ENCODE measurements at regions of chr14 and their contacts with region 1.

Region 1: DNA sequence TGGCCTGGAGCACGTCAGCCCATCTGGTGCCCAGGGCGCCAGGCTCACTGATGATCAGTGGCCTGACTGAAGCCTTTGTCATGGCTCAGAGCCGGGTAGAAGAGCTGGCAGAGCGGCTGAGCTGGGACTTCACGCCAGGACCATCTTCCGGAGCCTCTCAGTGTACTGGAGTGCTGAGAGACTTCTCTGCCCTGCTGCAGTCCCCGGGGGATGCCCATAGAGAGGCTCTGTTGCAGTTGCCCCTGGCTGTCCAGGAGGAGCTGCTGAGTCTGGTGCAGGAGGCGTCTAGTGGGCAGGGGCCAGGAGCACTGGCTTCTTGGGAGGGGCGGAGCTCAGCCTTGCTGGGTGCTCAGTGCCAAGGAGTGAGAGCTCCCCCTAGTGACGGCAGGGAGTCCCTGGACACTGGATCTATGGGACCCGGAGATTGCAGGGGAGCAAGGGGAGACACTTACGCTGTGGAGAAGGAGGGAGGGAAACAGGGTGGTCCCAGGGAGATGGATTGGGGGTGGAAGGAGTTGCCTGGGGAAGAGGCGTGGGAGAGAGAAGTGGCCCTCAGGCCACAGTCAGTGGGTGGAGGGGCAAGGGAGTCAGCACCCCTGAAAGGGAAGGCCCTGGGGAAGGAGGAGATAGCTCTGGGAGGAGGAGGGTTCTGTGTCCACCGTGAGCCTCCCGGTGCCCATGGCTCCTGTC is 2.0 kb downstream of the KHNYN start:
- DNase-seq: peak; percentile 92
- H3K4me3 Mint-ChIP-seq: peak overlapping the region; percentile 92
- H3K27ac Mint-ChIP-seq: peak overlapping the region; percentile 92
- H3K4me1 Mint-ChIP-seq: peaks cover 60% of the 10 kb centered on the region
- H3K27me3 Mint-ChIP-seq: no peaks in the 10 kb centered on the region

Region 2: GRCh38 chr14:24271134-24271833 is 160.4 kb before region 1 on chr14 and contains the start of gene RABGGTA:
- CTCF ChIA-PET with region 1: interaction called, 7 read pairs
- POLR2A ChIA-PET with region 1: interaction called, 22 read pairs
- DNase-seq: peak; percentile 90
- H3K4me3 Mint-ChIP-seq: peak within 1 kb of the TSS; percentile 86
- H3K27ac Mint-ChIP-seq: peak within 1 kb of the TSS; percentile 92
- H3K4me1 Mint-ChIP-seq: peaks cover 43% of the 10 kb centered on the region
- H3K27me3 Mint-ChIP-seq: no peaks in the 10 kb centered on the region
- total RNA-seq, gene RABGGTA: 40.2 to 41.0 TPM

Region 3: DNA sequence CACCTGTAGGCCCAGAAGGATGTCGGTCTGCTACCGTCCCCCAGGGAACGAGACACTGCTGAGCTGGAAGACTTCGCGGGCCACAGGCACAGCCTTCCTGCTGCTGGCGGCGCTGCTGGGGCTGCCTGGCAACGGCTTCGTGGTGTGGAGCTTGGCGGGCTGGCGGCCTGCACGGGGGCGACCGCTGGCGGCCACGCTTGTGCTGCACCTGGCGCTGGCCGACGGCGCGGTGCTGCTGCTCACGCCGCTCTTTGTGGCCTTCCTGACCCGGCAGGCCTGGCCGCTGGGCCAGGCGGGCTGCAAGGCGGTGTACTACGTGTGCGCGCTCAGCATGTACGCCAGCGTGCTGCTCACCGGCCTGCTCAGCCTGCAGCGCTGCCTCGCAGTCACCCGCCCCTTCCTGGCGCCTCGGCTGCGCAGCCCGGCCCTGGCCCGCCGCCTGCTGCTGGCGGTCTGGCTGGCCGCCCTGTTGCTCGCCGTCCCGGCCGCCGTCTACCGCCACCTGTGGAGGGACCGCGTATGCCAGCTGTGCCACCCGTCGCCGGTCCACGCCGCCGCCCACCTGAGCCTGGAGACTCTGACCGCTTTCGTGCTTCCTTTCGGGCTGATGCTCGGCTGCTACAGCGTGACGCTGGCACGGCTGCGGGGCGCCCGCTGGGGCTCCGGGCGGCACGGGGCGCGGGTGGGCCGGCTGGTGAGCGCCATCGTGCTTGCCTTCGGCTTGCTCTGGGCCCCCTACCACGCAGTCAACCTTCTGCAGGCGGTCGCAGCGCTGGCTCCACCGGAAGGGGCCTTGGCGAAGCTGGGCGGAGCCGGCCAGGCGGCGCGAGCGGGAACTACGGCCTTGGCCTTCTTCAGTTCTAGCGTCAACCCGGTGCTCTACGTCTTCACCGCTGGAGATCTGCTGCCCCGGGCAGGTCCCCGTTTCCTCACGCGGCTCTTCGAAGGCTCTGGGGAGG is 120.8 kb before region 1 on chr14 and contains the start of gene LTB4R:
- CTCF ChIA-PET with region 1: interaction called, 67 read pairs
- POLR2A ChIA-PET with region 1: interaction called, 34 read pairs
- DNase-seq: peak; percentile 76
- H3K4me3 Mint-ChIP-seq: peak within 1 kb of the TSS; percentile 87
- H3K27ac Mint-ChIP-seq: peak within 1 kb of the TSS; percentile 96
- H3K4me1 Mint-ChIP-seq: peaks cover 75% of the 10 kb centered on the region
- H3K27me3 Mint-ChIP-seq: no peaks in the 10 kb centered on the region
- total RNA-seq, gene LTB4R: 36.1 to 37.9 TPM

Region 4: DNA sequence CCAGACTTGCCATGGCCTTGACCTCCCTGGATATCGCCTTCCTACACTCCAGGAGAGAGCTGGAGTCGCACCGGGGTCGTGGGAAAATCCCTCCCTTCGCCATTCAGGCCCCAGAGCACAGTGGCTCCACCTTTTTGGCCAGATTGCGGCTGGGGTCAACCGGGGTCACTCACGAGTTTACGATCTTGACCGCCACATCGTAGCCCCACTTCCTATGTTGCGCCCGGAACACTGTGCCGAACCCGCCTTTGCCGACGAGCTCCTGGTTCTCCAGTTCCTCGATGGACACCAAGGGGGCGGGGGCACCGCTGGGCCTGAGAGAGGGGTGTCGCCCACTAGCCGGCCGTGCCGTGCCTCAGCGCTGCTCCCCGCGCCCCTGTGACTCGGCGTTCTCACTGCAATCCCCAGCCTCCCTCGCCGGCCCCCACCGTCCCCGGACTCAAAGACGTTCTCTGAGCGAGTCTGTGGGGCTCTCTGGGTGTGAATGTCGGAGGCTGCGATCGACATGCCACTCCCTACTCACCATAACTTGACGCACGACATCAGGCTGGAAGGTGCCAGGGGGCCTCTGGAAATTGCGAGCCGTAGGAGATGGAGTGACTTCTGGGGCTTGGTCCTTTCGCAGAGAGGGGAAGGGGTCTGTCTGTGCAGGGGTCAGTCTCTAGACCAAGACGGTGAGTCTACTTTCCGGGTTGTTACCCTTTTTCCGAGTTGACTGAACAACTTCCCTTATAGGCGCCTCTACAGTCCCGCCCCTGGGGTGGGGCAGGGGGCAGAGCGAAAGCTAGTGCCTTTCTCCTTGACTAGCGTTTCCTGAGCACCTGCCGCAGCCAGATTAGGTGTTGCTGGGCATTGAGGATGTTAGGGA is 92.2 kb before region 1 on chr14 and contains the start of gene RIPK3:
- CTCF ChIA-PET with region 1: interaction called, 494 read pairs
- POLR2A ChIA-PET with region 1: interaction called, 221 read pairs
- DNase-seq: peak; percentile 82
- H3K4me3 Mint-ChIP-seq: peak within 1 kb of the TSS; percentile 97
- H3K27ac Mint-ChIP-seq: peak within 1 kb of the TSS; percentile 83
- H3K4me1 Mint-ChIP-seq: peaks cover 42% of the 10 kb centered on the region
- H3K27me3 Mint-ChIP-seq: peaks cover 31% of the 10 kb centered on the region
- total RNA-seq, gene RIPK3: 37.3 to 38.0 TPM

Region 5: DNA sequence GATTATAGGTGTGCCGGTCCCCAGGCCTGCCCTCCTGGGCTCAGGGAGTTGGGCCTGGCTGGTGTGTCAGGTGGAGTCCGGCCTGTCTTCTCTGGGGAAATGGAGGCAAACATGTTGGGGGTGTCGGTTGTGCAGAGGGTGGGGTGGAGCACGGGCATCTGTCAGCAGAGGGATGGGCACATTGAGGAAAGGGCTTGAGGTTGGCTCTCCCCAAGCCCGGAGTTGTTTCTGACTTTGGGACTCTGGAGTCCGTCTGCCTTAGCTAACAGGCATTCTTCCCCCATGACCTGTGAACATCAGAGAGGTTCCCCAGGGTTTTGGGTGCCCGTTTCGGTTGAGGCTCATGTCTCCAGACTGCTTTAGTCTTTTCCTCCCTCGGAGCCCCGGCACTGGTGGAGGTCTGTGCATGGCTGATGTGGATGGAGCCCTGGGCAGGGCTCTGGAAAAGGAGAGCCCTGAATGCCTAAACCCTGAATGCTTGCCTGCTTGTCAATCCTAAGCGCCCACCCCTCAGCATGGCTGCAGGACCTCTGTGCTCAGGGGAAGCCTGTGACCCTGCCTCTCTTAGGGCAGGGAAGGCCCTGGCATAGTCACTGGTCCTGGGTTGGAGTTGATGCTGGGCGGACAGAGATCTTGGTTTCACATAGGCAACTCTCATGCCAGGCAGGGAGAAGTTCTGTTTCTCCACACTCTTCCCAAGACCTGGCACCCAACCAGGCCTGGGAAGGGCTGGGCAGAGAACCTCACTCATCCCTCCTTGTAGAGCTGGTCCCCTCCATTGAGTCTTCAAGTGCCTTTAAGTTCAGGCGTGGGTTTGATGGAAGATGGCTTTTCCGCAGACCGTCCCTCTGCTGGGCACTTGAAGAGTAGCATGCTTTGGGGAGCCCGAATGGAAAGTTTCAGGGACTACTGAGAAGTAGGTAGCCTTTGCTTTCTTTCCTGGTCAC is 20.0 kb before region 1 on chr14:
- CTCF ChIA-PET with region 1: interaction called, 18 read pairs
- POLR2A ChIA-PET with region 1: interaction called, 48 read pairs
- DNase-seq: peak; percentile 43
- H3K4me3 Mint-ChIP-seq: no peak overlapping the region
- H3K27ac Mint-ChIP-seq: no peak overlapping the region
- H3K4me1 Mint-ChIP-seq: no peaks in the 10 kb centered on the region
- H3K27me3 Mint-ChIP-seq: peaks cover 6% of the 10 kb centered on the region

Region 6: GRCh38 chr14:24442273-24443052 is 10.7 kb after region 1 on chr14 and contains the start of gene SDR39U1:
- CTCF ChIA-PET with region 1: interaction called, 54 read pairs
- POLR2A ChIA-PET with region 1: interaction called, 117 read pairs
- DNase-seq: peak; percentile 98
- H3K4me3 Mint-ChIP-seq: peak within 1 kb of the TSS; percentile 92
- H3K27ac Mint-ChIP-seq: peak within 1 kb of the TSS; percentile 97
- H3K4me1 Mint-ChIP-seq: peaks cover 52% of the 10 kb centered on the region
- H3K27me3 Mint-ChIP-seq: no peaks in the 10 kb centered on the region
- total RNA-seq, gene SDR39U1: 38.5 to 41.6 TPM

Region 7: DNA sequence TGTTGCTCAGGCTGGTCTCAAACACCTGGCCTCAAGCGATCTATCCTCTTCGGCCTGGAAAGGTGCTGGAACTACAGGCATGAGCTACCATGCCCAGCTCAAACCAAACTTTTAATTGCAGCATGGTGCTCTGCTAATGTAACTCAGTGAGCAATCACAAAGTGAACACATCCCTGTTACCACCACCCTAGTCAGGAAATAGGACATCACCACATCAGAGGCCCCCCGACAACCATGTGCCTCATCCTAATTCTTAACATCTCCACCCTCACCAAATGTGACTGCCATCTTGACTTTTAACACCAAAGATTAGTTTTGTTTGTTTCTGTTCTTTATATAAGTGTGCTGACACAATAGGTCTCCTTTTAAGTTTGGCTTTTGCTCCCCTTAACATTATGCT is 33.7 kb after region 1 on chr14:
- CTCF ChIA-PET with region 1: no interaction called
- POLR2A ChIA-PET with region 1: no interaction called
- DNase-seq: no peak
- H3K4me3 Mint-ChIP-seq: no peak overlapping the region
- H3K27ac Mint-ChIP-seq: no peak overlapping the region
- H3K4me1 Mint-ChIP-seq: peaks cover 12% of the 10 kb centered on the region
- H3K27me3 Mint-ChIP-seq: no peaks in the 10 kb centered on the region

Measured in activated CD4-positive, alpha-beta memory T cell treated with anti-CD3 and anti-CD28 coated beads, Interleukin-2, amount 10 ng/mL, durations not matched to agents 7 days and 5 days (primary cell).